Ovary (tissue), 10 donors: ENCODE measurements at regions of chr9 and their contacts with region 1.

Region 1: DNA sequence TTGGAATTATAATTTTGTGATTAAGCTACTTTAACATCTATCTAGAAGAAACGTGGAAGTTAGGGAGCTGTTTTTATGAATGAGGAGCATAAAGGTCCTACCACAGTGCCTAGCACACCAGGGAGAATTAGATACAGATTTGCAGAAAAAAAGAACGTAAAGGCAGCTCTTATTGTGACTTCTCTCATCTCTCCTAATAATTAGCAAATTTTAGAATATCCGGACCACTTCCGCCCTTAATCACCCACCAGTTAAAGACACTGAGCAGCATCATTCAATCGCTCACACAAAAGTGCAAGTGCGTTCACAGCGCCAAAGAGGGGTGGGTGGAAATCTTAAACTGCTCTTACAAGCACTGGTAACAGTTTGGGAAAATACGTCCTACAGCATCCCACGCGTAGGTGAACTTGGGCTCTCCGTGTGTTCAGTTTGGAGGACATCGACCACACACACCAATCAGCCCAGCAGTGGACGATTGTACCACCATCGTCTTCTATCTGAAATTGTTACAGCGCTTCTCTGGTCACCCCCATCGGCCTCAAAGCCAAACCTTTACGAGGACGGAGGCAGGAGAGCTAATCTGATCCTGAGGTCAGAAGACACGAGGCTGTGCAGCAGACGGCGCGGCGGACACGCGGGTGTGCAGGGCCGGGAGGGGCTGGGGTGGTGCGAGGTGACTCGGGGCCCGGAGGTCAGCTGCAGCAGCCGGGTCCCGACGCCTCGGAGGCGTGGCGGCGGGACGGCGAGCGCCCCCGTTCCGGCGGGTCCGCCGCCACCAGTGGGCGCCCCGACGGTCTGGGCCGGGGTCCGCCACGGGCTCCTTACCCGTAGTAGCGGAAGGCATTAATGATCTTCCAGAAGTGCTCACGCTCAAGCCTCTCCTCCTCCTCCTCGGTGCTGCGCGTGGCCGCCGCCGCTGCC is 646 bp downstream of the CARNMT1 start:
- DNase-seq: peak; percentile 34 to 69 (median 64)
- H3K4me3 ChIP-seq: peak overlapping the region; percentile 88
- H3K27ac ChIP-seq: peak overlapping the region; percentile 72 to 94
- H3K4me1 ChIP-seq: peaks cover 2% of the 10 kb centered on the region
- H3K27me3 ChIP-seq: no peaks in the 10 kb centered on the region
- CTCF ChIP-seq: peak in 1 of 3 donors; percentile 38
- EP300 ChIP-seq: no peak
- POLR2A ChIP-seq: no peak

Region 2: DNA sequence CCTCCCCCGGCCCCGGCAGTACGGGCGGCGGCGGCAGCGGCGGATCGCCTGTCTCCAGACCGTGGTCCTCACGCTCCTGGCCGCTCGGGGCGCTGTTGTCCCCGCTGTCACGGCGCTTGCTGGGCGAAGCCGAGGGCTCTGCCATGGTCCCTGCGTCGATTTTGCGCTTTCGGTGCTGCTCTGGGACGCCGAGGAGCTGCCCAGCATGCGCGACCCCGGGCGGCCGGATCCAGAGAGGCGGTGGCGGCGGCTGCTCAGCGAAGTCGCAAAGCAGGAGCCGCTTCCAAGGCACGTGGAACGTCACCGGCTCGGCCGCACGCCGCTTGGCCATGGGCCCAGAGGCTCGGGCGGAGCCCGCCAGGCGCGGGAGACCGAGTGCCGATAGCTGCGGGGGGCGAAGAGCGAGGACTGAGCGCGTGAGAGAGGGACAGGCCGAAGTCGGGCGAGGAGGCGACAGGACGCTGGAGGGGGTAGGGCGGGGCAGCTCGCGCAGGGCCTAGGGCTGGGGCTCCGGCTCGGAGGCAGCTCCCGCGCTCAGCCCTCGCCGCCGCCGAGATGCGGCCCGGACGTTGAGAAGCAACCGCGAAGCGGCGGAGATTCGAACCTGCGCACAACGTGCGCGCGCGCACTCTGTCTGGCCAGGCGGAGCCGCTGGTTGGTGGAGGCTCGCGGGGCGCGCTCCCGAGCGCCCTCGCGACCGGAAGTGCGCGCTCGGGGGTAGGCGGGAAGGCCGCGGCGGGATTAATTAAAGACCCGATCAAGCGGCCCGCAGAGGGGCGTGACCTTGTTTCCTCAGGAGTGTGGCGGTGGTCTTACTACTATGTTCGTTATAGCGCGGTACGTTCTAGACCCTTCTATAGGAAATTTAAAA is 74.9 kb before region 1 on chr9 and contains the start of gene C9orf40:
- intact Hi-C with region 1: loop called in 1 of 4 experiments (anchors 10 kb)
- DNase-seq: peak; percentile 86 to 92 (median 90)
- H3K4me3 ChIP-seq: peak within 1 kb of the TSS; percentile 81
- H3K27ac ChIP-seq: peak within 1 kb of the TSS; percentile 74 to 93
- H3K4me1 ChIP-seq: peaks cover 1% of the 10 kb centered on the region
- H3K27me3 ChIP-seq: no peaks in the 10 kb centered on the region
- CTCF ChIP-seq: peak; percentile 82 to 88 (median 84)
- EP300 ChIP-seq: no peak
- POLR2A ChIP-seq: peak; percentile 34
- total RNA-seq, gene C9orf40: 2.9 to 4.9 (median 3.9) TPM

Region 3: GRCh38 chr9:75071530-75072124 is 44.2 kb after region 1 on chr9:
- intact Hi-C with region 1: loop called in 1 of 4 experiments (anchors 10 kb)
- DNase-seq: no peak
- H3K4me3 ChIP-seq: no peak overlapping the region
- H3K27ac ChIP-seq: no peak overlapping the region
- H3K4me1 ChIP-seq: no peaks in the 10 kb centered on the region
- H3K27me3 ChIP-seq: no peaks in the 10 kb centered on the region
- CTCF ChIP-seq: no peak
- EP300 ChIP-seq: no peak
- POLR2A ChIP-seq: no peak

Region 4: GRCh38 chr9:75083188-75083970 is 55.9 kb after region 1 on chr9:
- intact Hi-C with region 1: loop called in 2 of 4 experiments (anchors 5 to 10 kb)
- DNase-seq: no peak
- H3K4me3 ChIP-seq: no peak overlapping the region
- H3K27ac ChIP-seq: peak overlapping the region in 1 of 2 donors; percentile 14
- H3K4me1 ChIP-seq: peaks cover 7% of the 10 kb centered on the region
- H3K27me3 ChIP-seq: no peaks in the 10 kb centered on the region
- CTCF ChIP-seq: no peak
- EP300 ChIP-seq: no peak
- POLR2A ChIP-seq: no peak